H1 (cell line): ENCODE measurements at regions of chr16 and their contacts with region 1.

Region 1: GRCh38 chr16:72995151-72995881 is 52.6 kb downstream of the ZFHX3 start:
- DNase-seq: peak; percentile 23 to 87
- H3K4me3 ChIP-seq: no peak overlapping the region
- H3K27ac ChIP-seq: no peak overlapping the region
- H3K4me1 ChIP-seq: peaks cover 2 to 11% (median 6%) of the 10 kb centered on the region in 4 experiments; a peak in 6 of 7 replicates
- H3K27me3 ChIP-seq: no peaks in the 10 kb centered on the region
- CTCF ChIP-seq: peak; percentile 48 to 81 (median 77)
- EP300 ChIP-seq: no peak
- POLR2A ChIP-seq: no peak
- RAD21 ChIP-seq: peak; percentile 35 to 48; a peak in 2 of 4 replicates

Region 2: GRCh38 chr16:72807245-72807644 is 188.1 kb before region 1 on chr16:
- CTCF ChIA-PET with region 1: no interaction called
- POLR2A ChIA-PET with region 1: no interaction called
- DNase-seq: no peak
- H3K4me3 ChIP-seq: no peak overlapping the region
- H3K27ac ChIP-seq: no peak overlapping the region
- H3K4me1 ChIP-seq: peaks cover 0 to 5% (median 2%) of the 10 kb centered on the region in 4 experiments; a peak in 3 of 7 replicates
- H3K27me3 ChIP-seq: no peaks in the 10 kb centered on the region
- CTCF ChIP-seq: no peak
- EP300 ChIP-seq: no peak
- POLR2A ChIP-seq: no peak
- RAD21 ChIP-seq: no peak

Region 3: GRCh38 chr16:72908362-72909167 is 86.8 kb before region 1 on chr16:
- CTCF ChIA-PET with region 1: interaction called, 11 read pairs
- POLR2A ChIA-PET with region 1: no interaction called
- DNase-seq: no peak
- H3K4me3 ChIP-seq: no peak overlapping the region
- H3K27ac ChIP-seq: no peak overlapping the region
- H3K4me1 ChIP-seq: peaks cover 0 to 2% (median 0%) of the 10 kb centered on the region in 4 experiments; a peak in 2 of 7 replicates
- H3K27me3 ChIP-seq: no peaks in the 10 kb centered on the region
- CTCF ChIP-seq: no peak
- EP300 ChIP-seq: no peak
- POLR2A ChIP-seq: no peak
- RAD21 ChIP-seq: no peak

Region 4: DNA sequence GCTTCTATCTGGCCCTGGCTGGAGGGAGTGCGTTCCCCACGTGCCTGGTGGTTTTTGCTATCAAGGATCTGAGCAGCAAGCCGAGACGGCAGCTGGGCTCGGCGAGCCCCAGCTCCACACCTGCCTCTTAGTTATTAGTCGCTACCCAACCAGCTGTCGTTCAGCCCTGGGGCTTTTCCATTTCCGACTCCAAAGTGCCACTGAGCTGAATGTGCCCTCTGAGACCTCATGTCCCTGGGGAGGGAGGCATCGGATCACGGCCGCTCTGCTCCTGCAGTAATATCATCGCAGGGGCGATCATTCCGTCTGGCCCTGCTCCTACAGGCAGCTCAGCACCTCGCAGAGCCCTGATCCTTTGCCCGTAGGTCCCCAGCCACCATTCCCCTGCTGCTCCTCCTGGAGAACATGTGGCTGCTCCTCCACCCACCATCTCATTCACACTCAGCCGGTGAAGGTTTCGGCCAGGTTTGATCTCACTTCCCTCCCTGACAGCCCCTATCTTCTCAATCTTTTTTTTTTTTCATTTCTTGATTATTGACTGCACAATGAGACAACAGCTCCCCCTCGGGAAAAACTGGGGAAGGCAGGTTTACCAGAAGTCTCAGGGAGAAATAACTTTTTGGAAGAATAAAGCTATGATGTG is 34.1 kb before region 1 on chr16:
- CTCF ChIA-PET with region 1: interaction called, 17 read pairs
- POLR2A ChIA-PET with region 1: no interaction called
- DNase-seq: no peak
- H3K4me3 ChIP-seq: no peak overlapping the region
- H3K27ac ChIP-seq: no peak overlapping the region
- H3K4me1 ChIP-seq: no peaks in the 10 kb centered on the region; a peak in 1 of 7 replicates
- H3K27me3 ChIP-seq: no peaks in the 10 kb centered on the region
- CTCF ChIP-seq: peak in 2 of 3 experiments; percentile 7 to 8; a peak in 2 of 4 replicates
- EP300 ChIP-seq: no peak
- POLR2A ChIP-seq: no peak
- RAD21 ChIP-seq: peak; percentile 25 to 35; a peak in 3 of 4 replicates

Region 5: GRCh38 chr16:73010150-73010676 is 14.9 kb after region 1 on chr16:
- CTCF ChIA-PET with region 1: interaction called, 33 read pairs
- POLR2A ChIA-PET with region 1: no interaction called
- DNase-seq: no peak
- H3K4me3 ChIP-seq: no peak overlapping the region
- H3K27ac ChIP-seq: no peak overlapping the region
- H3K4me1 ChIP-seq: peaks cover 0 to 5% (median 0%) of the 10 kb centered on the region in 4 experiments; a peak in 1 of 7 replicates
- H3K27me3 ChIP-seq: no peaks in the 10 kb centered on the region
- CTCF ChIP-seq: no peak
- EP300 ChIP-seq: no peak
- POLR2A ChIP-seq: no peak
- RAD21 ChIP-seq: no peak

Region 6: DNA sequence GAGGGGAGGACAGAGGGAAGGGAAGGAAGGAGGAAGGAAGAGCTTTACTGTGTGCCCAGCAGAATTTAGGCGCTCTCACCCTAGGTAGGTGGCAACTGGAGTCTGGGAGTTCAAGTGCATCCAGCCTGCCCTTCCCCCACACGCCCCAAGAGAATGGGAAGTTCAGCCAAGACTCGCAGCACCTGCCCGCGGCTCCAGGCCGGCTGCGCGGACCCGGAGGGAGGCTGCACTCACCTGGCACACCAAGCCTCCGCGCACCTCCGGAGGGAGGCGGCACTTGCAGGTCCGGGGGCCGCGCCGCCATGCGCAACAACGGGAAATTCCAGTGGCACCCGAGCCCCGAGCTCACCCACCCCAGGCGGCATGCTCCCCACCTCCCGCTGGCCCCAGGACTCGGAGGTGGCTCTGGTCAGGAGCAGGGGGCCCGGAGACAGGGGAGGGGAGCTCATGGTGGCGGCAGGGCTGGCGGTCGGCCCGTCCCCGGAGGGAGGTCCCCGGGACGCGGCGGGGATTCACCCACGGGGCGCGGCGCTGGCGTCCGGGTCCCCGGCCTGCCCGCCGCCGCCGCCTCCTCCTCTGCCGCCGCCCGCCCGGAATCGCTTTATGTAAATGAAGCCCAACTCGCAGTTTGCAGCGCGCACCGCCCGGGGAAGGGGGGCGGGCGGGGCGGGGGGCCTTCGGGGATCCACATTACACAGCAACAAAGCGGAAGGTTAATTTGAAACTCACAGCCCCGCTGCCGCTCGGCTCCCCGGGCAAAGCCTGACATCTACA is 52.4 kb after region 1 on chr16 and contains the start of gene ZFHX3:
- CTCF ChIA-PET with region 1: interaction called, 15 read pairs
- POLR2A ChIA-PET with region 1: no interaction called
- DNase-seq: peak in 1 of 2 experiments; percentile 84
- H3K4me3 ChIP-seq: peak within 1 kb of the TSS; percentile 38 to 66 (median 46)
- H3K27ac ChIP-seq: no peak within 1 kb of the TSS
- H3K4me1 ChIP-seq: peaks cover 15 to 35% (median 29%) of the 10 kb centered on the region in 4 experiments
- H3K27me3 ChIP-seq: peaks cover 69 to 98% (median 95%) of the 10 kb centered on the region in 4 experiments
- CTCF ChIP-seq: no peak; a peak in 1 of 4 replicates
- EP300 ChIP-seq: no peak
- POLR2A ChIP-seq: no peak
- RAD21 ChIP-seq: peak; percentile 31 to 47; a peak in 3 of 4 replicates
- total RNA-seq, gene ZFHX3: 0.90 and 0.99 TPM in 2 replicates